CD8-positive, alpha-beta T cell (primary cell): ENCODE measurements at regions of chr6 and their contacts with region 1.

Region 1: GRCh38 chr6:2900821-2901644 is 2.1 kb downstream of the SERPINB9 start:
- DNase-seq: peak in 1 of 9 experiments; percentile 46
- ATAC-seq: no peak
- H3K4me3 ChIP-seq: peak overlapping the region; percentile 73 to 90
- H3K4me3 Mint-ChIP-seq: peak overlapping the region; percentile 99
- H3K27ac ChIP-seq: peak overlapping the region; percentile 67 to 82
- H3K27ac Mint-ChIP-seq: peak overlapping the region; percentile 96
- H3K4me1 ChIP-seq: peaks cover 37% of the 10 kb centered on the region
- H3K4me1 Mint-ChIP-seq: peaks cover 60% of the 10 kb centered on the region
- H3K27me3 ChIP-seq: no peaks in the 10 kb centered on the region
- H3K27me3 Mint-ChIP-seq: no peaks in the 10 kb centered on the region
- CTCF ChIP-seq: no peak

Region 2: GRCh38 chr6:2885967-2886735 is 14.9 kb before region 1 on chr6:
- CTCF ChIA-PET with region 1: interaction called, 6 read pairs
- POLR2A ChIA-PET with region 1: interaction called, 8 read pairs
- intact Hi-C with region 1: loop called in 1 of 2 experiments (anchors 2 kb)
- DNase-seq: no peak
- ATAC-seq: peak; percentile 29
- H3K4me3 ChIP-seq: no peak overlapping the region
- H3K4me3 Mint-ChIP-seq: no peak overlapping the region
- H3K27ac ChIP-seq: peak overlapping the region in 1 of 2 experiments; percentile 37
- H3K27ac Mint-ChIP-seq: peak overlapping the region; percentile 74
- H3K4me1 ChIP-seq: peaks cover 18% of the 10 kb centered on the region
- H3K4me1 Mint-ChIP-seq: peaks cover 75% of the 10 kb centered on the region
- H3K27me3 ChIP-seq: no peaks in the 10 kb centered on the region
- H3K27me3 Mint-ChIP-seq: no peaks in the 10 kb centered on the region
- CTCF ChIP-seq: no peak

Region 3: DNA sequence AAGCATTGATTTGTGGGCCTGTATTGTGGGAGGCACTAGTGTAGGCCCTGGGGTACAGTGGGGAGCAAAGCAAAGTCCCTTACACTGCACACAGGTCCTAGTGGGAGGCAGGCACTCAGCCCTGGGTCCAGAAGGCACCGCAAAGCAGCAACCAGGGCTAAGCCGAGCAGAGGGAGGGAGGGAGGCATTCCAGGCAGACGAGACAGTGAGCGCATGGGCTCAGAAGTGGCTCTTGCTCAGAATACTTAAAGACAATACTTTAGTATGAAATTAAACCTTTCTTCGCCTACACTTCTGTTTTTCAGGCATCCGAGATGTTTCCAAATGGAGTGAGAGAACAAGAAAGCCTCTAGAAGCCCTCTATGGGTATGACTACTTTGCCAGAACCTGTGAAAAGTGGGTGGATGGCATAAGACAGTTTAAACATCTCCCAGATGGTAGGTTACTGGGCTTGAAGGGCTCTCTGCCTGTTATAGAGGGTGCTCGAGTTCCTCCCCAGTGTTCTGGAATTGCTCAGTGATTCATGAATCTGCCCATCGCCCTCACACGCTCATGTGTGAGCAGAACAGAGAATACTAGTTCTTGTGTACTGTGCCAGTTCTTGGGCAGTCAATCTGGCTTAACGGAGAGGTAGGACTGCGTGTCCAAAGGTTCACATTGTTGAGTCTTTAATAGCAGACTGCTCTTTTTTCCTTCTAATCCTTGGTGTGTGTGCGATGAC is 236.2 kb after region 1 on chr6:
- CTCF ChIA-PET with region 1: no interaction called
- POLR2A ChIA-PET with region 1: no interaction called
- intact Hi-C with region 1: no loop called
- DNase-seq: no peak
- ATAC-seq: no peak
- H3K4me3 ChIP-seq: no peak overlapping the region
- H3K4me3 Mint-ChIP-seq: no peak overlapping the region
- H3K27ac ChIP-seq: no peak overlapping the region
- H3K27ac Mint-ChIP-seq: no peak overlapping the region
- H3K4me1 ChIP-seq: no peaks in the 10 kb centered on the region
- H3K4me1 Mint-ChIP-seq: no peaks in the 10 kb centered on the region
- H3K27me3 ChIP-seq: no peaks in the 10 kb centered on the region
- H3K27me3 Mint-ChIP-seq: no peaks in the 10 kb centered on the region
- CTCF ChIP-seq: no peak